ENCODE measurements at regions of chr13 and their contacts with region 1.

Region 1: DNA sequence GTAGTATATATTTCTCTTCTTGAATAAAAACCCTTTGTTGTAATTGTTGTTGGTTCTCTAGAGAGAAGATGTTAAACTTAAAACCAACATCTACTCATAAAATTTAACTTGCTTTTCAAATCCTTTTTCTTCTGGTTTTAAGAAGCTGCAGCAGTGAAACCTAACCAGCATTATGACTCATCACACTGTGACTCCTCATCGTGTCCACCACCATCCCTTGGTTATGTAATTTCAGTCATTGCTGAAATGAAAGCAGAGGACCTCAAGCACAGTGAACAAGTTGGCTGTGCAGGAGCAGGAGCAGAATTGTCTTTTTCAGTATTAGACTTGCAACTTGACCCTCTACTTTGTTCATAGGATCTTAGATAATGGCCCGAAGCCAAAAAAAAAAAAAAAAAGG is 64.9 kb upstream of the HTR2A start:
- DNase-seq: no peak
- H3K4me3 Mint-ChIP-seq: no peak overlapping the region
- H3K27ac Mint-ChIP-seq: no peak overlapping the region
- H3K4me1 Mint-ChIP-seq: peaks cover 8% of the 10 kb centered on the region
- H3K27me3 Mint-ChIP-seq: no peaks in the 10 kb centered on the region
- CTCF ChIP-seq: no peak

Region 2: GRCh38 chr13:46893798-46894560 is 67.7 kb before region 1 on chr13:
- CTCF ChIA-PET with region 1: interaction called, 13 read pairs
- intact Hi-C with region 1: no loop called
- DNase-seq: peak; percentile 68
- H3K4me3 Mint-ChIP-seq: peak overlapping the region; percentile 74
- H3K27ac Mint-ChIP-seq: no peak overlapping the region
- H3K4me1 Mint-ChIP-seq: peaks cover 6% of the 10 kb centered on the region
- H3K27me3 Mint-ChIP-seq: peaks cover 62% of the 10 kb centered on the region
- CTCF ChIP-seq: peak; percentile 88

Region 3: GRCh38 chr13:46934749-46935148 is 27.0 kb before region 1 on chr13:
- CTCF ChIA-PET with region 1: no interaction called
- intact Hi-C with region 1: no loop called
- DNase-seq: no peak
- H3K4me3 Mint-ChIP-seq: no peak overlapping the region
- H3K27ac Mint-ChIP-seq: no peak overlapping the region
- H3K4me1 Mint-ChIP-seq: no peaks in the 10 kb centered on the region
- H3K27me3 Mint-ChIP-seq: no peaks in the 10 kb centered on the region
- CTCF ChIP-seq: no peak

Region 4: GRCh38 chr13:47109028-47109427 is 147.3 kb after region 1 on chr13:
- CTCF ChIA-PET with region 1: no interaction called
- intact Hi-C with region 1: no loop called
- DNase-seq: peak; percentile 5
- H3K4me3 Mint-ChIP-seq: no peak overlapping the region
- H3K27ac Mint-ChIP-seq: no peak overlapping the region
- H3K4me1 Mint-ChIP-seq: peaks cover 42% of the 10 kb centered on the region
- H3K27me3 Mint-ChIP-seq: no peaks in the 10 kb centered on the region
- CTCF ChIP-seq: no peak

Region 5: GRCh38 chr13:47175172-47175866 is 213.6 kb after region 1 on chr13:
- CTCF ChIA-PET with region 1: no interaction called
- intact Hi-C with region 1: no loop called
- DNase-seq: no peak
- H3K4me3 Mint-ChIP-seq: no peak overlapping the region
- H3K27ac Mint-ChIP-seq: no peak overlapping the region
- H3K4me1 Mint-ChIP-seq: peaks cover 9% of the 10 kb centered on the region
- H3K27me3 Mint-ChIP-seq: no peaks in the 10 kb centered on the region
- CTCF ChIP-seq: no peak

Region 6: GRCh38 chr13:48078251-48078656 is 1116.5 kb after region 1 on chr13:
- CTCF ChIA-PET with region 1: no interaction called
- intact Hi-C with region 1: no loop called
- DNase-seq: peak; percentile 14
- H3K4me3 Mint-ChIP-seq: no peak overlapping the region
- H3K27ac Mint-ChIP-seq: no peak overlapping the region
- H3K4me1 Mint-ChIP-seq: no peaks in the 10 kb centered on the region
- H3K27me3 Mint-ChIP-seq: no peaks in the 10 kb centered on the region
- CTCF ChIP-seq: no peak